Right ventricle myocardium inferior (tissue), 1 donor: ENCODE measurements at regions of chr2 and their contacts with region 1.

Region 1: GRCh38 chr2:88739985-88740600 is 48.6 kb downstream of the RPIA start:
- DNase-seq: no peak
- ATAC-seq: peak; percentile 79

Region 2: GRCh38 chr2:88545121-88545520 is 195.0 kb before region 1 on chr2:
- intact Hi-C with region 1: no loop called
- DNase-seq: no peak
- ATAC-seq: no peak

Region 3: DNA sequence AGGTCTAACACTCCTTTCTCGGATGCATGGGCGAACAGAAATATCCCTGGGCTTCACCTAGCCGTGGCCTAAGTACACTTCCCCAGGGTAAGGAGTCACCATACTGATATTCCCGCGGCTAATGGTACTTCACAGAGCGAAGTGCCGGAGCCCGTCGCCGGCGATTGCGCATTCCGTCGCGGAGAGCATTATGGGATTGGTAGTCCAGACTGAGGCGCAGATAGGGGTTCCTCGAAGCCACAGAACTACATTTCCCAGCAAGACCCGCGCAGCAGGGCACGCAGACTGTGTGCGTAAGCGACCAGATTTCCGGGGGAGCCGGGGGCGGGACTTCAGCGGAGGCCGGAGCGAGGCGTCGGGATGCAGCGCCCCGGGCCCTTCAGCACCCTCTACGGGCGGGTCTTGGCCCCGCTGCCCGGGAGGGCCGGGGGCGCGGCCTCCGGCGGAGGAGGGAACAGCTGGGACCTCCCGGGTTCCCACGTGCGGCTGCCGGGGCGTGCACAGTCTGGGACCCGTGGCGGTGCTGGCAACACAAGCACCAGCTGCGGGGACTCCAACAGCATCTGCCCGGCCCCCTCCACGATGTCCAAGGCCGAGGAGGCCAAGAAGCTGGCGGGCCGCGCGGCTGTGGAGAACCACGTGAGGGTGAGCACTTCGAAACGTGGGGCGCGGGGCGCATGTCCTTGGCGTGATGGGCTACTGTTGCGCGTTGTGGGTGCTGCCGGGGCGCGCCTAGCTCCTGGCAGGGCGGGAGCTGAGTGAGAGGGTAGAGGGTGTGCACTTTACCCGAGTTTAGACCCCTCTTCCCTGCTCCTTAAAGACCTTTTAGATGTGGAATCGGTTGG is 48.5 kb before region 1 on chr2 and contains the start of gene RPIA:
- intact Hi-C with region 1: loop called (anchors 5 kb)
- DNase-seq: peak; percentile 99
- ATAC-seq: peak; percentile 99
- total RNA-seq, gene RPIA: 15.8 TPM

Region 4: GRCh38 chr2:88831792-88832248 is 91.7 kb after region 1 on chr2:
- intact Hi-C with region 1: loop called (anchors 5 kb)
- DNase-seq: no peak
- ATAC-seq: no peak